Activated B cell treated with CpG ODN at 0.5 μM for 24 hours (primary cell): ENCODE measurements at regions of chr12 and their contacts with region 1.

Region 1: DNA sequence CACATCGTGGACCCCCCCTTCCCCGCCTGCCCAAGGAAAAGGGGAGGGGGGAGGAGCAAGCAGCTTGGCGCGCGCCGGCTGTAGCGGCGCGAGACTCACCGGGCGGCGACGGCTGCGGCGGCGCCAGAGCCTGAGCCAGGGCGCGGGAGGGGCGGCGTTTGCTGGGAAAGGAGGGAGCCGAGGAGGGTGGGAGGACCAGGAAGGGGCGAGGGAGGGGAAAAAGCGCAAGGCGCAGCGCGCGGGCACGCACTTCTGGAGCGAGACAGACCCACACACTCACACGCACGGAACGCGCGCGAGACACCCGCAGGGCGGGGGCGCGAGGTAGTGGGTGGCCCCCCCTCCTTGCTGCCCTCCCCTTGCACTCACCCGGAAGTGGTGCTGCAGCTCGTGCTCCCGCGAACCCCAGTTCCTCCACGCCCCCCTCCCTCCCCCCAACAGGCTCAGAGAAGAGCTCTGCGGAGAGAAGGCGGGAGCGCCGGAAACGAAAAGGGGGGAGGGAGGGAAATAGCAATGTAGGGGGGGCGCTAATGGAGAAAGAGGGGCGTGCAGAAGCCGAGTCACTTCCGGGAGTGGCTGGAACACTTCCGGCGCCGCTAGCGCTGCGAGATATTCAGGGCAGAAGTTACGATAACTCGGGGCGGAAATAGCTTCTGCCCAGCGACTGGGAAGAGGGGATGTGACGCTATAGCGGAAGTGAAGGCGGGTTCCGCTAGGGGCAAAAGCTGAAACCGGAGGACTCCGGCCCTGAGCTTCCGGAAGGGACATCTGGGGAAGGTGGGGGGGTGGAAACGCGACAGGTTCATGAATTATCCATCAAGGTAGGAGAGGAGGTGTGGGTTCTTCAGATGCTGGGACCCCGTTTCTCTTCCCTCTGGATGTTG is at the start of gene ZNF384:
- DNase-seq: peak; percentile 84
- ATAC-seq: peak; percentile 77
- H3K4me3 Mint-ChIP-seq: peak within 1 kb of the TSS; percentile 94
- H3K27ac Mint-ChIP-seq: peak within 1 kb of the TSS; percentile 96
- H3K4me1 Mint-ChIP-seq: peaks cover 52% of the 10 kb centered on the region
- H3K27me3 Mint-ChIP-seq: no peaks in the 10 kb centered on the region
- CTCF ChIP-seq: no peak
- total RNA-seq, gene ZNF384: 81.7 and 98.6 TPM in 2 replicates

Region 2: DNA sequence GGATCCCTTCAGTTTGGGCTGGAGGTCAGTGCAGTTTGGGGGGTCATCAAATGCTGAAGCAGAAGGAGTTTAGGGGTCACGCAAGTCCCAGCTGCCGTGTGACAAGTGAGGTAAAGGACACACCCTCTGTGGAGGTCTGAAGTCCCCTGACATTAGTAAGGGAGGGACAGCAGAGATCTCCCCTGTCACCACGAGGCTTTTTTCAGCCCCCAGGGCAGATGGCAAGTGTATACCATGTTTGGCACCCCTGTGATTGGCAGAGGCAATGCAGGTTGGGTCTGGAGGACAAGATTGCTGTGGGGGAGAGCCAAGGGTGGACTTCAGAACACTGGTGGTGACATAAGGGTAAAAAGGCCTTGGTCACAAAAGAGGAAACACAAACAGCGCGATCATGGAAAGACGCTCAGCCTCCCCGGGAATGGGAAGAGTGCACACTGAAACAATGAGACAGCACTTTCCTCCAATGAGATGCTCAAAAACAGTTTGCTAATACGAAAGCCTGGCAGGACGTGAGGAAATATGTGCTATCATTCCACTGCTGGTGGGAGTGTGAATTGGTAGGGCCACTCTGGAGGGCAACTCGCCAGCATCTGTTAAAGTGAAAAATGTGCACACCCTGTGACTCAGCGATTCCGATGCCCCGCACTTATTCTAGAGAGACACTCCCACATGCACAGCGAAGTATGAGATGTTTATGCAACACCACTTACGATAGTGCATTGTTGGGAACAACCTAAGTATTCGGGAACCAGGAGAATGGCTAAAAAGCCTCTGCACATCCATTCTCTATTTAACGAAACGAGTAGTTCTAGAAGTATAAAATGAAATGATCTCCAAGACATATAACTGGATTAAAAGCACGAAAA is 258.9 kb before region 1 on chr12:
- CTCF ChIA-PET with region 1: no interaction called
- POLR2A ChIA-PET with region 1: interaction called, 4 read pairs
- intact Hi-C with region 1: loop called (anchors 1 kb)
- DNase-seq: no peak
- ATAC-seq: no peak
- H3K4me3 Mint-ChIP-seq: peak overlapping the region; percentile 58
- H3K27ac Mint-ChIP-seq: peak overlapping the region; percentile 65
- H3K4me1 Mint-ChIP-seq: peaks cover 72% of the 10 kb centered on the region
- H3K27me3 Mint-ChIP-seq: no peaks in the 10 kb centered on the region
- CTCF ChIP-seq: no peak

Region 3: GRCh38 chr12:6570264-6570887 is 118.9 kb before region 1 on chr12:
- CTCF ChIA-PET with region 1: interaction called, 15 read pairs
- POLR2A ChIA-PET with region 1: interaction called, 12 read pairs
- intact Hi-C with region 1: loop called (anchors 1 kb)
- DNase-seq: peak; percentile 37
- ATAC-seq: no peak
- H3K4me3 Mint-ChIP-seq: no peak overlapping the region
- H3K27ac Mint-ChIP-seq: peak overlapping the region; percentile 41
- H3K4me1 Mint-ChIP-seq: peaks cover 28% of the 10 kb centered on the region
- H3K27me3 Mint-ChIP-seq: no peaks in the 10 kb centered on the region
- CTCF ChIP-seq: no peak

Region 4: GRCh38 chr12:6620137-6620884 is 68.9 kb before region 1 on chr12:
- CTCF ChIA-PET with region 1: interaction called, 22 read pairs
- POLR2A ChIA-PET with region 1: interaction called, 48 read pairs
- intact Hi-C with region 1: loop called (anchors 1 kb)
- DNase-seq: peak; percentile 53
- ATAC-seq: peak; percentile 66
- H3K4me3 Mint-ChIP-seq: no peak overlapping the region
- H3K27ac Mint-ChIP-seq: peak overlapping the region; percentile 73
- H3K4me1 Mint-ChIP-seq: peaks cover 40% of the 10 kb centered on the region
- H3K27me3 Mint-ChIP-seq: no peaks in the 10 kb centered on the region
- CTCF ChIP-seq: no peak

Region 5: DNA sequence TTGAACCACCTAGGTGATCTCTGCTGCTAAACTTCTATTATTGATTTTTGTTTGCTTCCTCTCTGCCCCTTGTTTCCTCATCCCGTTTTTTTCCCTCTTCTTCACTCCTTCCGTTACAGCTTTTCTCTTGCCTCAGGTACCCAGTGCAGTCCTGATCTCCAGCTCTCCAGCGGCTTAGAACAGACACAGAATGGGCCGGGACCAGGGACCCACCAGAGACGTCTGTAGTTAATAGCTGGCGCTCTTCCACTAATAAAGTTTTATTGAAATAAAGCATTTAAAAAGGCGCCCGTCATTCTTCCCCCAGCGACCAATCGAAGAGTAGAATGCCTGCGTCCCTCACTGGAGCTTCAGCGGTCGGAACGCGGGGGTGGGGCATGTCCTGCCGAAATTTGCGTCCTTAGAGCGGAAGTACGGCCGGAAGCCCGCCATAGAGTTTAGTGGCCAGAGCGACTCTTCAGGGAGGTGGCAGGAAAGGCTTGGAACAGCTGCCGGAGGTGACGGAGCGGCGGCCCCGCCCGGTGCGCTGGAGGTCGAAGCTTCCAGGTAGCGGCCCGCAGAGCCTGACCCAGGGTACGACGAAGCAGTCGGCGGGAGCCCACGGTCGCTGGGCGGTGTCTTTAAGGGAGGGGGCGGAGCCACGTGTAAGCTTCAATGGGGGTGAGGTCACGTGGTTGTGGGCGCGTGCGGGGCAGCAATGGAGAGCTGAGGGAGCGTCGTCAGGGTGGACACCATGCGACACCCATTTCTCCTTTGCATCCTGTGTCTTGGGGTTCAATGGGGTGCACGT is 34.6 kb after region 1 on chr12 and contains the start of gene COPS7A:
- CTCF ChIA-PET with region 1: interaction called, 13 read pairs
- POLR2A ChIA-PET with region 1: interaction called, 232 read pairs
- intact Hi-C with region 1: loop called (anchors 1 kb)
- DNase-seq: peak; percentile 92
- ATAC-seq: peak; percentile 93
- H3K4me3 Mint-ChIP-seq: peak within 1 kb of the TSS; percentile 89
- H3K27ac Mint-ChIP-seq: peak within 1 kb of the TSS; percentile 96
- H3K4me1 Mint-ChIP-seq: peaks cover 19% of the 10 kb centered on the region
- H3K27me3 Mint-ChIP-seq: no peaks in the 10 kb centered on the region
- CTCF ChIP-seq: no peak
- total RNA-seq, gene COPS7A: 28.1 and 35.8 TPM in 2 replicates

Region 6: GRCh38 chr12:6825398-6826124 is 136.3 kb after region 1 on chr12:
- CTCF ChIA-PET with region 1: no interaction called
- POLR2A ChIA-PET with region 1: no interaction called
- intact Hi-C with region 1: loop called (anchors 5 kb)
- DNase-seq: peak; percentile 69
- ATAC-seq: peak; percentile 62
- H3K4me3 Mint-ChIP-seq: no peak overlapping the region
- H3K27ac Mint-ChIP-seq: no peak overlapping the region
- H3K4me1 Mint-ChIP-seq: peaks cover 32% of the 10 kb centered on the region
- H3K27me3 Mint-ChIP-seq: peaks cover 73% of the 10 kb centered on the region
- CTCF ChIP-seq: peak; percentile 47